SK-N-SH (cell line): ENCODE measurements at regions of chr12 and their contacts with region 1.

Region 1: DNA sequence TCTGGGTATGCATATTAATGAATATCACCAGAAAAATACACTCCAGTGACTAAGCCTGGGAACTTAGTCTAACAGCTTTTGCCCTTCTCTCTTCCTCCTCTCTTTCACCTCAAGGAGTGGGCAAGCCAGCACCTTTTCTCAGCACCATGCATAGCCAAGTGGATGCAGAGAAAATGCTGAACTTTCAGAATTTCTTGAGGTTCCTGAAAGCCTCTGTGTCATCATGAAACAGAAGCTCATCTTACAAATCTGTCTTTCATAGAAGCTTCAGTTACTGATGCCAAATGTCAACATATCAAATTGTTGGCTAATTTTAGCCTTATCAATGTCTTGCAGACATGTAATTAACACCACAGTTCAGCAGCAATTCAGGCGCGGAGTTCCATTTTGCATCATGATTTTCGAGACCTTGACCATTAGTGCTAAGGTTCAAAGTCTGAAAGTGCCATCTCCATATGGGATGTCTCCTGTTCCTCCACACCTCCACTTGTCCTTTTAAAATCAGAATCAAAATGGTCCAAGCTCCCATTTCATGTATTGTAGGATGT is 51.1 kb upstream of the RPH3A start:
- DNase-seq: no peak
- H3K4me3 ChIP-seq: no peak overlapping the region
- H3K27ac ChIP-seq: no peak overlapping the region
- H3K4me1 ChIP-seq: no peaks in the 10 kb centered on the region
- H3K27me3 ChIP-seq: no peaks in the 10 kb centered on the region
- CTCF ChIP-seq: no peak
- EP300 ChIP-seq: no peak
- RAD21 ChIP-seq: no peak

Region 2: GRCh38 chr12:112728875-112729274 is 11.6 kb before region 1 on chr12:
- CTCF ChIA-PET with region 1: interaction called, 12 read pairs
- POLR2A ChIA-PET with region 1: no interaction called
- DNase-seq: no peak
- H3K4me3 ChIP-seq: no peak overlapping the region
- H3K27ac ChIP-seq: no peak overlapping the region
- H3K4me1 ChIP-seq: no peaks in the 10 kb centered on the region
- H3K27me3 ChIP-seq: no peaks in the 10 kb centered on the region
- CTCF ChIP-seq: no peak
- EP300 ChIP-seq: no peak
- RAD21 ChIP-seq: no peak